CD4-positive, alpha-beta T cell (primary cell): ENCODE measurements at regions of chr12 and their contacts with region 1.

Region 1: DNA sequence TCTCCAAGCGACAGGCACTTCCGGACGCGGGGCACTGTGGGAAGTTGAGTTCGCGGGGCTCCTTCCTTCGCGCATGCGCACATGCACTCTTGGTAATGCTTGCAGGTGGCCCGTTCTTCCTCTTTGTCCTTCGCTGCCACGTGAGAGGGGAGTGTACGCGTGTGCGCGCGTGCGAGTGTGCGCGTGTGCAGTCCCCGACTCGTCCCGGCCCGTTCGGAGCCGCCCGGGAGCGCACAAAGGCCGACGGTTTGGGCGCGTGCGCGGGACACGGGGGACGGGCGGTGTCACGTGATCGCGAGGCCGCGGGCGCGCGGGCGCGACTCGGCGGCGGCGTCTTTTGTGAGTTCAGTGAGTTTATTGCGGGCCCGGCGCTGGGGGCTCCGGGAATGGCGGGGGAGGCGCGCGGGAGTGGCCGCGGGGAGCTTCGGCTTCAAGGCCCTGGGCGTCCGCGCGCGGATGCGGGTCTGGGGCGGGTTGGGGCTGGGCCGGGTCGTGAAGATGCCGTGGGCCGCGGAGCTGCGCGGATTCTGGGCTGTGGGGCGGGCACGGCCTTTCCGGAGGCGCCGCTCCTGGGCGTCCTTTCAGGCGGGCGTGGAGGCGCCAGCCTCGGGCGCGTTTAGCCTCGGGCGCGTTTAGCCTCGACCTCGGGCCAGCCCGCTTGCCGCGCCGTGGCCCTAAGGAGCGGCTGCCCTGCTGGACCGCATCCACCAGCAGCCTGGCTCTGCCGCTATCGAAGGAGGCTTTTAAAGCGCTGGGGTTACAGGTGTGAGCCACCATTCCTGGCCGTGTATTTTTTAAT is at the start of gene ZNF84:
- DNase-seq: peak; percentile 92 to 99 (median 96)
- ATAC-seq: peak; percentile 95
- H3K4me3 ChIP-seq: peak within 1 kb of the TSS; percentile 68
- H3K4me3 Mint-ChIP-seq: peak within 1 kb of the TSS; percentile 95
- H3K27ac ChIP-seq: peak within 1 kb of the TSS; percentile 70 to 79
- H3K27ac Mint-ChIP-seq: peak within 1 kb of the TSS; percentile 90
- H3K4me1 ChIP-seq: peaks cover 12% of the 10 kb centered on the region
- H3K4me1 Mint-ChIP-seq: peaks cover 25% of the 10 kb centered on the region
- H3K27me3 ChIP-seq: no peaks in the 10 kb centered on the region
- H3K27me3 Mint-ChIP-seq: no peaks in the 10 kb centered on the region
- CTCF ChIP-seq: no peak
- total RNA-seq, gene ZNF84: 22.8 to 26.0 TPM

Region 2: GRCh38 chr12:132710422-132711168 is 326.8 kb before region 1 on chr12 and contains the start of gene PGAM5:
- CTCF ChIA-PET with region 1: no interaction called
- POLR2A ChIA-PET with region 1: no interaction called
- intact Hi-C with region 1: loop called in 1 of 2 experiments (anchors 10 kb)
- DNase-seq: peak; percentile 83 to 99 (median 92)
- ATAC-seq: peak; percentile 97
- H3K4me3 ChIP-seq: peak within 1 kb of the TSS; percentile 81
- H3K4me3 Mint-ChIP-seq: peak within 1 kb of the TSS; percentile 93
- H3K27ac ChIP-seq: peak within 1 kb of the TSS; percentile 88 to 93
- H3K27ac Mint-ChIP-seq: peak within 1 kb of the TSS; percentile 92
- H3K4me1 ChIP-seq: peaks cover 34% of the 10 kb centered on the region
- H3K4me1 Mint-ChIP-seq: peaks cover 16% of the 10 kb centered on the region
- H3K27me3 ChIP-seq: no peaks in the 10 kb centered on the region
- H3K27me3 Mint-ChIP-seq: no peaks in the 10 kb centered on the region
- CTCF ChIP-seq: no peak
- total RNA-seq, gene PGAM5: 12.8 to 15.1 TPM

Region 3: DNA sequence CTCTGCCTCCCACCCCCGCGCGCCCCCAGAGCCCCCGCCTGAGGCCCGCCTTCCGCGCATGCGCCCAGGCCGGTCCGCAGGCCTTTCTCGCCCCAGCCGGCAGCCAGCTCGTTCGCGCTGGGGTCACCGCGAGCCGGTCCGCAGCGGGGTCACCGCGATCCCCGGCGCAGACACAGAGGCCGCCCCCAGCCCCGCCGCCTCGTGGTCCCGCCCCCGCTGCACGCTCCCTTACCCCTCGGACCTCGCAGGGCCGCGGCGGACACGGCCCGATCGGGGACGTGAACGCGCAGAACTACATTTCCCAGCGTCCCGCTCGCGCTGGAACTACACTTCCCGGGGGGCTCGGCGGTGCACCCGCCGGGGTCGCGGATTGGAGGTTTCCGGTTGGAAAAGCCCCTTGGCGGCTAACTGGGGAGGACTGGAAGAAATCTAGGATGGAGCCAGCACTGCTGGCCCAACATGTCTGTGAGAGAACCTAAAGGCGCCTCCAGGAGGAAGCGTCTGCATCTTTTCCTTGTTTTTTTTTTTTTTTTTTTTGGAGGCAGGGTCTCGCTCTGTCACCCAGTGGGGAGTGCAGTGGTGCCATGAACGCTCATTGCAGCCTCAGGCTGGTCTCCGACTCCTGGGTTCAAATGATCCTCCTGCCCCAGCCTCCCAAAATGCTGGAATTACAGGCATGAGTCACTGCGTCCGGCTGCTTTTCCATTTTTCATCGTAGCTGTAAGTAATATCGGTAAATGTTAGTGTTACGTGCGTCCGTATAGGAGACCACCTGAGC is 81.2 kb before region 1 on chr12 and contains the start of gene ZNF605:
- CTCF ChIA-PET with region 1: no interaction called
- POLR2A ChIA-PET with region 1: interaction called, 3 read pairs
- intact Hi-C with region 1: loop called in 1 of 2 experiments (anchors 1 kb)
- DNase-seq: peak; percentile 63 to 94 (median 79)
- ATAC-seq: peak; percentile 95
- H3K4me3 ChIP-seq: peak within 1 kb of the TSS; percentile 78
- H3K4me3 Mint-ChIP-seq: peak within 1 kb of the TSS; percentile 98
- H3K27ac ChIP-seq: peak within 1 kb of the TSS; percentile 33 to 64
- H3K27ac Mint-ChIP-seq: peak within 1 kb of the TSS; percentile 89
- H3K4me1 ChIP-seq: peaks cover 23% of the 10 kb centered on the region
- H3K4me1 Mint-ChIP-seq: peaks cover 29% of the 10 kb centered on the region
- H3K27me3 ChIP-seq: no peaks in the 10 kb centered on the region
- H3K27me3 Mint-ChIP-seq: no peaks in the 10 kb centered on the region
- CTCF ChIP-seq: no peak
- total RNA-seq, gene ZNF605: 5.3 to 5.8 TPM

Region 4: GRCh38 chr12:133058203-133059125 is 21.1 kb after region 1 on chr12:
- CTCF ChIA-PET with region 1: no interaction called
- POLR2A ChIA-PET with region 1: interaction called, 3 read pairs
- intact Hi-C with region 1: loop called in 1 of 2 experiments (anchors 1 kb)
- DNase-seq: peak in 1 of 14 experiments; percentile 7
- ATAC-seq: no peak
- H3K4me3 ChIP-seq: no peak overlapping the region
- H3K4me3 Mint-ChIP-seq: no peak overlapping the region
- H3K27ac ChIP-seq: no peak overlapping the region
- H3K27ac Mint-ChIP-seq: no peak overlapping the region
- H3K4me1 ChIP-seq: no peaks in the 10 kb centered on the region
- H3K4me1 Mint-ChIP-seq: no peaks in the 10 kb centered on the region
- H3K27me3 ChIP-seq: no peaks in the 10 kb centered on the region
- H3K27me3 Mint-ChIP-seq: no peaks in the 10 kb centered on the region
- CTCF ChIP-seq: no peak

Region 5: GRCh38 chr12:133130038-133130807 is 92.8 kb after region 1 on chr12 and contains the starts of genes ZNF10 and ZNF891:
- CTCF ChIA-PET with region 1: no interaction called
- POLR2A ChIA-PET with region 1: interaction called, 12 read pairs
- intact Hi-C with region 1: loop called (anchors 1 kb)
- DNase-seq: peak; percentile 95 to 99 (median 96)
- ATAC-seq: peak; percentile 85
- H3K4me3 ChIP-seq: peak within 1 kb of the TSS; percentile 78
- H3K4me3 Mint-ChIP-seq: peak within 1 kb of the TSS; percentile 94
- H3K27ac ChIP-seq: peak within 1 kb of the TSS; percentile 97 to 99
- H3K27ac Mint-ChIP-seq: peak within 1 kb of the TSS; percentile 99
- H3K4me1 ChIP-seq: peaks cover 16% of the 10 kb centered on the region
- H3K4me1 Mint-ChIP-seq: peaks cover 30% of the 10 kb centered on the region
- H3K27me3 ChIP-seq: no peaks in the 10 kb centered on the region
- H3K27me3 Mint-ChIP-seq: no peaks in the 10 kb centered on the region
- CTCF ChIP-seq: no peak
- total RNA-seq, gene ZNF10: 43.3 to 47.8 TPM
- total RNA-seq, gene ZNF891: 4.5 TPM